ENCODE measurements at regions of chr11 and their contacts with region 1.

Region 1: DNA sequence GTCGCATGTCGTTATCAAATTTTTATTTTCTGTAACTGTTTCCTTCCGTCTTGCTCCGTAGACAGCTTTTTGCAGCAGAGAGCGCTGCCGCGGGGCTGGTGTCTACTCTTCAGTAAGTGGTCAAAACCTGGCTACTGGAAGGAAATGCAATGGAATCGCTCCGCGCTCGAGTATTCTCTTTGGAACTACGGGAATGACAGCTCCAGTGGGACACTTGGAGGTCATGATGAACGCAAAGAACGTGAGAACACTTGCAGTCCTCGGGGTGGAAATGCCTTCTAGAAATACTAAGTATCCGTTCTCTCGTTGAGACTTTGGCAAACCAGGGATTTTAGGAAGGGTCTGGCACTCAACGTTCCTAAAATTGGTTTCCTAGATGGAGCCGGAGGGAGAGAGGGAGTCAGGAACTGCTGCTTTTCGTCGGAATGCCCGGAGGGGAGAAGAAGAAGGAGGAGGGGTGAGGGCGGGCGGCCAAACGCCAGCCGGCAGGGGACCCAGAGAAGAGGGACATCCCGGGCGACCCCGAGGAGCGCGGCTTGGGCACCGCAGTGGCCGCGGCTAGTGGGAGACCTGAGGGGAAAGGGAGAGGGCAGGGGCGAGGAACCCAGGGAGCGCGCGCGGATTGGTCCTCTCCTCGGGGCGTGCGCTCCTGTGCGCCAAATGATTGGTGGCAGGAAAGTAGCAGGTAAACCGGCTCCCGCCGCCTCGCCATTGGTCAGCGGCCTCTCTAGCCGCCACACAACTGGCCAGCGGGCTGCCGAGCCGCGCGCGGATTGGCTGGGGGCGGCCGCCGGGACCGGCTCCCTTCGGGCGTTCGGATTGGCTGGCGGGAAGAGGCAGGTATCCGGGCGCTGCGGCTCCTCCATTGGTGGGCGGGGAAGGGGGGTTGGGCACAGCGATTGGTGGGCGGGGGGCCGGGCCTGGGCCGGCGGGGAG is 490 bp upstream of the BMAL1 start:
- DNase-seq: peak; percentile 97
- ATAC-seq: peak; percentile 94
- H3K4me3 ChIP-seq: peak overlapping the region; percentile 95
- H3K27ac ChIP-seq: peak overlapping the region; percentile 18; the same call in 1 of the 2 replicates
- H3K4me1 ChIP-seq: peaks cover 4% of the 10 kb centered on the region; the same call in 1 of the 2 replicates
- H3K27me3 ChIP-seq: peaks cover 4% of the 10 kb centered on the region; the same call in 1 of the 2 replicates
- CTCF ChIP-seq: no peak
- POLR2A ChIP-seq: no peak; the same call in 1 of the 2 replicates
- RAD21 ChIP-seq: no peak

Region 2: DNA sequence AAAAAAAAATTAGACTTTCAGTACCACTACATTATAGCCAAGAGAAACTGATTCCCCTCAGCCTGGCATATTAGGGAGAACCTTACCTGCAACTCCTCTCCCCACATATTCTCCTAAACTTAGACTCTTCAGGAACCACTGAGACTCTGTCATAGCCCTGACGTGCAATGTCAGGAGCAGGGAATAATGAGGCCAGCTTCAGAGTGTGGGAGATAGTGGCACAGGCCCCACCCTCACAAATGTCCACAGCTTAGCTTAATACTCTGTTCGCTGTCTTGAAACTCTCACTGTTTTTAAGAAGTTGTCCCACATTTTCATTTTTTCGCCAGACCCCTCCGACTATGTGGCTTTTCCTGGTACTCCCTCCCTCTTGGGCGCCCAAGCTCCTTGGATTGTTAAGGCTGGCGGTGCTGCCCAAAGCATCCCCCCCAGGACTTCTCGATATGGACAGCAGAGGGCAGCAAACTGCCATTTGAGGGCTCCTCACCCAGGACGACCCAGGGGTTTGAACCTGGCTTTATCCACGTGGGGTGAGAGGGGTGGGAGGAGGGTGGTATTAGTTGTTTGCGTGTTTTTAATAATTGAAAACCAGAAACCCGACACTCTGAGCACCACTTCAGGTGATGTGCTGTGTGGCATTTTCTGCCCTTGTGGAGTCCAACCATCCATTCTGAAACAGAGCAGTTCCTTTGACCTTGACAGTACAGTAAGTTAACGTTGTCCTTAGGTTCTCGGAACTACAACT is 313.1 kb before region 1 on chr11:
- CTCF ChIA-PET with region 1: interaction called, 3 read pairs
- POLR2A ChIA-PET with region 1: no interaction called
- dilution Hi-C with region 1: no loop called
- in situ Hi-C with region 1: no loop called
- intact Hi-C with region 1: loop called (anchors 5 kb)
- DNase-seq: peak; percentile 48
- ATAC-seq: peak; percentile 99
- H3K4me3 ChIP-seq: no peak overlapping the region
- H3K27ac ChIP-seq: no peak overlapping the region
- H3K4me1 ChIP-seq: no peaks in the 10 kb centered on the region
- H3K27me3 ChIP-seq: peaks cover 32% of the 10 kb centered on the region
- CTCF ChIP-seq: peak; percentile 95
- POLR2A ChIP-seq: no peak
- RAD21 ChIP-seq: peak; percentile 96

Region 3: DNA sequence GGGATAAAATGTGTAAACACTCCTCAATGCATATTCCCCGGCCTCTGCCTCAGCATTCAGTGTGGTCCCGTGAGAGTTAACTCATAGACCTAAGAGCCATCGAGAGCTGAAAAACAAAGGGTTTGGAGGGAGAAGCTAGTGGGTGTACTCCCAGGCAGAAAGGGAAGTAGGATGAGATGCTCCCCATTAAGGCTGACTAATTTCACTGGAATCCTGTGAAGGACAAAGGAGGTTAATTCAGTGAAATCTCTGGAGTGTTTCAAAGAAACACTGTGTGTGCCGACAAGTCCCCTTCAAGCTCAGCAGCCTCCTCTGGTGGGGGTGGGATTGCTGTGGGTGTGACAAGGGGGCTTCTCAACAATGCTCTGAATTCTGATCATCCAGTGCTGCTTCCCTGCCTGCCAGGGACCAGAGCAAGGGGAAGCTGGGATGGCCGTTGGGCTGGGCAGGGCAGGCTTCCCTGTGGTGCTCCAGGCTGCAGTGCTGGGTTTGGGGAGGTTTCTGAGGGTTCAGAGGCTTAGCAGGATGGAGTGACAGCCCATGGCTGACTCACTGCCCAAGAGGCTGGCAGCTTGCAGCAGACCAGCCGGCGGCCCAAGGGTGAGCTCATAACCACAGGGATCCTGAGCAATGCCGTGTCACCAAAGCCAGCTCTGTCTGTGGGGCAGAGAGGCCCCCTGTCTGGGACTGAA is 60.9 kb before region 1 on chr11:
- CTCF ChIA-PET with region 1: no interaction called
- POLR2A ChIA-PET with region 1: no interaction called
- dilution Hi-C with region 1: no loop called
- in situ Hi-C with region 1: loop called (anchors 5 kb)
- intact Hi-C with region 1: loop called (anchors 2 kb)
- DNase-seq: peak; percentile 98
- ATAC-seq: peak; percentile 90
- H3K4me3 ChIP-seq: peak overlapping the region; percentile 16; the same call in 1 of the 2 replicates
- H3K27ac ChIP-seq: peak overlapping the region; percentile 98
- H3K4me1 ChIP-seq: peaks cover 20% of the 10 kb centered on the region
- H3K27me3 ChIP-seq: no peaks in the 10 kb centered on the region
- CTCF ChIP-seq: 0 out of 2 replicates have a peak, but pooled peaks have one; percentile 3
- POLR2A ChIP-seq: peak; percentile 75
- RAD21 ChIP-seq: no peak; the same call in 1 of the 2 replicates

Region 4: DNA sequence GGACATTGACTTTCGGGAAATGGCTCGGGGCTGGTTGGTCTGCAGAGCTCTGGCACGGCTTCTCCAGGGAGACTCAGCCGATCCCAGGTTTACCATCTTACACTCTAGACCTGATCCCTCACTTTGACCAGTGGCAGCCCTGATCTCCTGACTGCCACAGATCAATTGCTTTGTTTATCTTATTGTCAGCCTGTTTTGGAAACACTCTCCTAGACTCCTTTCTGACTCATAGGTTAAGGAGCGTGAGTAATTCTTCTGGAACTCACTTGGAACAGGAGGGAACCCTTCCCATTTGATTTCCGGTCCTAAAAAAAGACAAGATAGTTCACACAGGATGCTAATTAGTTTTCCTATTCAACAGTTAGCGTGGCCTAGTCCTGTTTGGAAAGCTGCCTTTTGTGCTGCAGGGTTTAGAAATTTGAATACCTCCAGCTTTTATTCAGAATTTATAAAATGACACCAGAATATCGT is 15.5 kb before region 1 on chr11:
- CTCF ChIA-PET with region 1: no interaction called
- POLR2A ChIA-PET with region 1: no interaction called
- dilution Hi-C with region 1: no loop called
- in situ Hi-C with region 1: no loop called
- intact Hi-C with region 1: loop called (anchors 1 kb)
- DNase-seq: peak; percentile 87
- ATAC-seq: peak; percentile 84
- H3K4me3 ChIP-seq: no peak overlapping the region
- H3K27ac ChIP-seq: peak overlapping the region; percentile 83
- H3K4me1 ChIP-seq: peaks cover 17% of the 10 kb centered on the region
- H3K27me3 ChIP-seq: no peaks in the 10 kb centered on the region
- CTCF ChIP-seq: no peak
- POLR2A ChIP-seq: no peak
- RAD21 ChIP-seq: no peak

Region 5: DNA sequence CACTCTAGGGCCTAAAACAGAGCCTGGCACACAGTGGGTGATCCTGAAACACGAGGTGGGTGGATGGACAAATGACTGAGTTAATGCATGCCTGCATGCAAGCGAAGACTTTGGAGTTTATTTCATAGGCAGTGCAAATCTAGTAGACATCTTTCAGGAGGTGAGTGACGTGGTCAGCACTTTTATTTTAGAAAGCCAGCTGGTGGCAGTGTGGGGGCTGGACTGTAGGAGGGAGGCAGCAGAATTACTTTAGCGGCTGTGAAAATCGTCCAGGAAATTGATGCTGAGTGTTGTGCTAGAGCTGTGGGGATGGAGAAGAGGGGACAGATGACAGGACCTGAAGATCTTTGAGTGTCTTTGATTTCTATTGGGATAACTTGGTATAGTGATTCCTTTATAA is 47.6 kb after region 1 on chr11:
- CTCF ChIA-PET with region 1: no interaction called
- POLR2A ChIA-PET with region 1: no interaction called
- dilution Hi-C with region 1: no loop called
- in situ Hi-C with region 1: no loop called
- intact Hi-C with region 1: loop called (anchors 5 kb)
- DNase-seq: no peak
- ATAC-seq: no peak
- H3K4me3 ChIP-seq: no peak overlapping the region
- H3K27ac ChIP-seq: no peak overlapping the region
- H3K4me1 ChIP-seq: peaks cover 7% of the 10 kb centered on the region
- H3K27me3 ChIP-seq: no peaks in the 10 kb centered on the region
- CTCF ChIP-seq: no peak
- POLR2A ChIP-seq: no peak
- RAD21 ChIP-seq: no peak

Region 6: GRCh38 chr11:13335319-13335718 is 58.2 kb after region 1 on chr11:
- CTCF ChIA-PET with region 1: interaction called, 6 read pairs
- POLR2A ChIA-PET with region 1: no interaction called
- dilution Hi-C with region 1: no loop called
- in situ Hi-C with region 1: no loop called
- intact Hi-C with region 1: loop called (anchors 2 kb)
- DNase-seq: peak; percentile 66
- ATAC-seq: peak; percentile 23
- H3K4me3 ChIP-seq: no peak overlapping the region
- H3K27ac ChIP-seq: no peak overlapping the region
- H3K4me1 ChIP-seq: peaks cover 29% of the 10 kb centered on the region
- H3K27me3 ChIP-seq: no peaks in the 10 kb centered on the region
- CTCF ChIP-seq: peak; percentile 78
- POLR2A ChIP-seq: no peak
- RAD21 ChIP-seq: peak; percentile 72

Region 7: GRCh38 chr11:13384908-13385640 is 108.0 kb after region 1 on chr11:
- CTCF ChIA-PET with region 1: no interaction called
- POLR2A ChIA-PET with region 1: no interaction called
- dilution Hi-C with region 1: no loop called
- in situ Hi-C with region 1: no loop called
- intact Hi-C with region 1: no loop called
- DNase-seq: peak; percentile 68
- ATAC-seq: peak; percentile 85
- H3K4me3 ChIP-seq: no peak overlapping the region
- H3K27ac ChIP-seq: no peak overlapping the region
- H3K4me1 ChIP-seq: no peaks in the 10 kb centered on the region; the same call in 1 of the 2 replicates
- H3K27me3 ChIP-seq: no peaks in the 10 kb centered on the region
- CTCF ChIP-seq: peak; percentile 73
- POLR2A ChIP-seq: no peak
- RAD21 ChIP-seq: peak; percentile 64

Region 8: DNA sequence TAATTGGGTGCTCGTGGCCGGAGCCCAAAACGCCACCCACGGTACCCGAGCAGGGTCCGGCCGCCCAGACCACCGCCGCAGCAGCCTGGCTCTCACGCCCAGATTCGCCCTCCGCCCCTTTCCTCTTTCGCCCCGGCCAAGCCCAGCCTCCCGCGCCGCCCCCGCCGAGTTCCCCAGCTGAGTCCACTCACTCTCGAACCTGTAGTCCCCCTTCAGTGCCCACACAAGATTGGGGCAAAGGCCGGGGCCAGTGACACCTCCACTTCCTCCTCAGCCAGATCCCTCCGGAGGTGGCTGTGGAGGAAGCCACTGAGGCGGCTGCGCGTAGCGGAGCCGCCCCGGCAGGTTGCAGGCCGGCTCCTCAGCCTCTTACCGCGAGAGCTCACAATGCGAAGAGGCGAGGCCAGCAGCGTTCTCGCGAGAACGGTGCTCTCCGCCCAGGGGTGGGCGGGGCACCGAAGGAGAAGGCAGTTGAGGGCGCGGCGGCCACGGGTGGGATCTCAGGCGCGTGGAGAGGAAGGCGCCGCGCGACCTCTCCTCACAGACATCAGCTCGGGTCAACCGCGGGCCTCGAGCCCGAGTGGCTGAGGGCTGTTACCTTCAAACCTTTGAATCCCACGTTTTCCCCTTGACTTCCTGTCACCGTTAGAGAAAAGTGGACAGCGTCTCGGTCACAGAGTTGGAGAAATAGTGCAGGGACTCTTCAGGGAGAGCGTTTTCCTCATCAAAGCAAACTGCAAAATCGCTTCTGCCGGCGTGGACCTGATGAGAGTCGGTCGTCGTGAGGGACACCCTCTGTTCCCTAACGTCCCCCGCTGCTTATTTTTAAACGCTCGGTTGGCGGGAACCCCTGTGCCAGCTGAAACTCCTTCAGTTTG is 186.0 kb after region 1 on chr11 and contains the start of gene BTBD10:
- CTCF ChIA-PET with region 1: no interaction called
- POLR2A ChIA-PET with region 1: no interaction called
- dilution Hi-C with region 1: no loop called
- in situ Hi-C with region 1: no loop called
- intact Hi-C with region 1: loop called (anchors 10 kb)
- DNase-seq: peak; percentile 93
- ATAC-seq: peak; percentile 98
- H3K4me3 ChIP-seq: peak within 1 kb of the TSS; percentile 82
- H3K27ac ChIP-seq: peak within 1 kb of the TSS; percentile 83
- H3K4me1 ChIP-seq: peaks cover 3% of the 10 kb centered on the region
- H3K27me3 ChIP-seq: peaks cover 6% of the 10 kb centered on the region
- CTCF ChIP-seq: no peak
- POLR2A ChIP-seq: peak; percentile 85
- RAD21 ChIP-seq: no peak
- total RNA-seq, gene BTBD10: 59.9 and 84.2 TPM in 2 replicates

Measured in IMR-90 (cell line).